MCF 10A (cell line): ENCODE measurements at regions of chr13 and their contacts with region 1.

Region 1: DNA sequence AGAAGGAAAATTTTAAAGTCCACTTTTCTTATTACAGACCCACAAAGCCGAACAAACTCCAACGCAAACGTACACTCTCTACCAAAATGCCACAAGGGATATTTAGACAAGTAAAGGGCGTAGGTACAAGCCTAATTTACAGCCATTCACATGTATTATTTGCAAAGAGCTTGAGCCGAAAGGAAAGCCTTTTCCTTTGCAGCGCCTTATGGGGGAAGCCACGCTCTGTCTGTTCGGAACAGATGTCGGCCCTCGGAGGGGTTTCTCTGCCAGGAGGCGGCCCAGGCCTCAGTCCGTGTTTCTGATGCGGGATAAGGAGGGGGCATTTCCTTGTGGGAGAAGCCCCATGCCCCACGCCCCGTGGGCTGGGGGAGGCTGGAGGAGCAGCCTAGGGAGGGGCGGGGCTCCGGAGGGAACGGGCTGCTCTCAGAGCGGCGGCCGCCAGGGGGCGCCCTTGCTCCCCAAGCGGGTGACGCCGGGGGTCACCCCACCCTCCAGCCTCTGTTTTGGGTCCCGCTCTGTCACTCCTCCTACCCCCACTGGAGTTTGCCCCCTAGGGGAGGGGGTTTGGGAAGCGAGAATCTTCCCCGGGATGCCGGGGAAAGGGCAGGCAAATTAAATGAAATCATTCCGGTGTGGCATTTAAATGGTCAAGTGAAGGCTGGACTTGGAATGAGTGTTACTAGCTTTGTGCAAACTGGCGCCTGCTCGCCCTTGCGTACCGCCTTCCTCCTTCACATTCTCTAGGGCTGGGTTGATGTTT is 2.9 kb downstream of the HTR2A start:
- DNase-seq: peak; percentile 64
- H3K4me3 Mint-ChIP-seq: peak overlapping the region; percentile 69
- H3K27ac Mint-ChIP-seq: no peak overlapping the region
- H3K4me1 Mint-ChIP-seq: peaks cover 16% of the 10 kb centered on the region
- H3K27me3 Mint-ChIP-seq: peaks cover 59% of the 10 kb centered on the region
- CTCF ChIP-seq: peak; percentile 99

Region 2: GRCh38 chr13:46831588-46832194 is 62.3 kb before region 1 on chr13:
- CTCF ChIA-PET with region 1: interaction called, 10 read pairs
- POLR2A ChIA-PET with region 1: no interaction called
- intact Hi-C with region 1: no loop called
- DNase-seq: peak; percentile 62
- H3K4me3 Mint-ChIP-seq: no peak overlapping the region
- H3K27ac Mint-ChIP-seq: no peak overlapping the region
- H3K4me1 Mint-ChIP-seq: no peaks in the 10 kb centered on the region
- H3K27me3 Mint-ChIP-seq: no peaks in the 10 kb centered on the region
- CTCF ChIP-seq: peak; percentile 88

Region 3: GRCh38 chr13:46874006-46874405 is 20.0 kb before region 1 on chr13:
- CTCF ChIA-PET with region 1: interaction called, 15 read pairs
- POLR2A ChIA-PET with region 1: interaction called, 3 read pairs
- intact Hi-C with region 1: no loop called
- DNase-seq: no peak
- H3K4me3 Mint-ChIP-seq: no peak overlapping the region
- H3K27ac Mint-ChIP-seq: no peak overlapping the region
- H3K4me1 Mint-ChIP-seq: no peaks in the 10 kb centered on the region
- H3K27me3 Mint-ChIP-seq: peaks cover 54% of the 10 kb centered on the region
- CTCF ChIP-seq: no peak

Region 4: GRCh38 chr13:46914341-46914740 is 20.4 kb after region 1 on chr13:
- CTCF ChIA-PET with region 1: interaction called, 12 read pairs
- POLR2A ChIA-PET with region 1: no interaction called
- intact Hi-C with region 1: no loop called
- DNase-seq: no peak
- H3K4me3 Mint-ChIP-seq: no peak overlapping the region
- H3K27ac Mint-ChIP-seq: no peak overlapping the region
- H3K4me1 Mint-ChIP-seq: no peaks in the 10 kb centered on the region
- H3K27me3 Mint-ChIP-seq: peaks cover 11% of the 10 kb centered on the region
- CTCF ChIP-seq: no peak